ENCODE measurements at regions of chr3 and their contacts with region 1.

Region 1: GRCh38 chr3:183766745-183767606 is 58.4 kb downstream of the MAP6D1 start:
- DNase-seq: peak; percentile 65 to 71 (median 68)
- H3K4me3 ChIP-seq: no peak overlapping the region
- H3K4me3 Mint-ChIP-seq: no peak overlapping the region
- H3K27ac ChIP-seq: no peak overlapping the region
- H3K27ac Mint-ChIP-seq: peak overlapping the region in 4 of 7 donors; percentile 10 to 72 (median 53)
- H3K4me1 ChIP-seq: no peaks in the 10 kb centered on the region
- H3K4me1 Mint-ChIP-seq: peaks cover 5 to 16% (median 10%) of the 10 kb centered on the region in 4 donors
- H3K27me3 ChIP-seq: no peaks in the 10 kb centered on the region
- H3K27me3 Mint-ChIP-seq: no peaks in the 10 kb centered on the region

Region 2: DNA sequence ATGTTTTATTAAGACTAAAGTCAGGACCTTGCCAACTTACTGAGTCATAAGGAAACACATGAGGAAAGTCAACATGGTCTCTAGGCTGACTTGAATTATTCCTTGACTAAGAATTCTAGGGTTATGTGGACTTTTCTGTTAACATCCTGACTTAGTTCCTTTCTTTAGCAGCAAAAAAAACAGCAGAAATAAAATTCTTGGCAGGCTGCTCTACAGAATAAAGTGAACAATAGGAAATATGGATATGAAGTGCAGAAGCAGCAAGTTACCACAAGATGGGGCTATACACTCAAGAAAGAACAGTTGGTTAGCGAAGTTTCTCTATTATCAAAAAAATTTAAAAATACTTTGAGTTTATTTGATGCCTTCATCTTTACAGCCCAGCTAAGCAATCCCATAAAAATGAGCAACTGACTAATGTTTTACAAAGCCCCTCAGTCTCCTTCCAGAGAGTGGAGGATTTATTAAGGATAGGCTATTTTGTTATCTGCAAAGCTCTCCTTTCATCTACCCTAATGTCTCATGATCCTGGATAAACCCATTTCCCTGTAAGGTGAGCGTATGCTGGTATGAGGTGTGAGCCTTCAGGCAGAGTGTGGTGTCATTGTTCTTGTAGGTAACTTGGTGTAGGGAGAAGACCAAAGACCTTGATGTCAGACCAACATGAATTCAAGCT is 644.6 kb before region 1 on chr3:
- CTCF ChIA-PET with region 1: interaction called, 7 read pairs
- POLR2A ChIA-PET with region 1: no interaction called
- intact Hi-C with region 1: loop called (anchors 1 kb)
- DNase-seq: peak in 4 of 5 donors; percentile 53 to 55 (median 54)
- H3K4me3 ChIP-seq: no peak overlapping the region
- H3K4me3 Mint-ChIP-seq: no peak overlapping the region
- H3K27ac ChIP-seq: no peak overlapping the region
- H3K27ac Mint-ChIP-seq: no peak overlapping the region
- H3K4me1 ChIP-seq: no peaks in the 10 kb centered on the region
- H3K4me1 Mint-ChIP-seq: no peaks in the 10 kb centered on the region
- H3K27me3 ChIP-seq: no peaks in the 10 kb centered on the region
- H3K27me3 Mint-ChIP-seq: peaks cover 0 to 2% of the 10 kb centered on the region in 2 donors

Region 3: GRCh38 chr3:183468424-183468823 is 298.6 kb before region 1 on chr3:
- CTCF ChIA-PET with region 1: interaction called, 153 read pairs
- POLR2A ChIA-PET with region 1: no interaction called
- intact Hi-C with region 1: loop called (anchors 1 kb)
- DNase-seq: no peak
- H3K4me3 ChIP-seq: no peak overlapping the region
- H3K4me3 Mint-ChIP-seq: no peak overlapping the region
- H3K27ac ChIP-seq: no peak overlapping the region
- H3K27ac Mint-ChIP-seq: no peak overlapping the region
- H3K4me1 ChIP-seq: peaks cover 7% of the 10 kb centered on the region
- H3K4me1 Mint-ChIP-seq: peaks cover 2 to 6% (median 6%) of the 10 kb centered on the region in 4 donors
- H3K27me3 ChIP-seq: no peaks in the 10 kb centered on the region
- H3K27me3 Mint-ChIP-seq: no peaks in the 10 kb centered on the region

Region 4: DNA sequence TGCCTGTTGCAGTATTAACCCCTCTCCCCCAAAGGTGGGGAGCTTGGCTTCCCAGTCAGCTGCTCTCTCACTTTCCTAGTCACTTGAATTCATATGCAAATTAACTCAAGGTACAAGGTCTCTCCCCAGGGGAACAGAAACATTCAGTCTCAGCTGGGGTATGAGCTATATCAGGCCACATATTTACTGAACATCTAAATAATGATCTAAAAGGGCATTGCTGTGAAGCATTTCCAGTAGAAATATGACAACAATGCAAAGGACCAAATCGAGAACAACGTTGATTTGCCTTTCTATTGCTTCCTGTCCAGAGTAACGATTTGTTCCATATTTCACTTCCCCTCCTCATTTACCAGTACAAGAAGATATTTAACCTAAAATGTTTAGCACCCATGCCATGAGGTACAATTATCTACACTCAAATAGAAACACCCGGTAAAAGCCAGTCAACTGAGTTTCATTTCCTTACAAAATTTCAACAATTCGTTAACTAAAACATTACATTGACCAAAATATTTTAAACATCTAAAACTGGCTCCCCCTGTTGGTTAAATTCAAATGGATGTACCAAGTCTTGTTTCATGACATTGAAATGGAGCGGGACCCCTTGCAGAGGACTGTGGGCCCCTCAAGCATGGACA is 175.0 kb before region 1 on chr3:
- CTCF ChIA-PET with region 1: interaction called, 19 read pairs
- POLR2A ChIA-PET with region 1: no interaction called
- intact Hi-C with region 1: loop called (anchors 1 kb)
- DNase-seq: peak in 4 of 5 donors; percentile 32 to 41 (median 38)
- H3K4me3 ChIP-seq: no peak overlapping the region
- H3K4me3 Mint-ChIP-seq: peak overlapping the region; percentile 56 to 88 (median 82)
- H3K27ac ChIP-seq: no peak overlapping the region
- H3K27ac Mint-ChIP-seq: peak overlapping the region; percentile 49 to 92 (median 78)
- H3K4me1 ChIP-seq: peaks cover 43% of the 10 kb centered on the region
- H3K4me1 Mint-ChIP-seq: peaks cover 23 to 46% (median 34%) of the 10 kb centered on the region in 4 donors
- H3K27me3 ChIP-seq: no peaks in the 10 kb centered on the region
- H3K27me3 Mint-ChIP-seq: no peaks in the 10 kb centered on the region

Region 5: GRCh38 chr3:183789826-183790225 is 22.9 kb after region 1 on chr3:
- CTCF ChIA-PET with region 1: interaction called, 10 read pairs
- POLR2A ChIA-PET with region 1: no interaction called
- intact Hi-C with region 1: no loop called
- DNase-seq: no peak
- H3K4me3 ChIP-seq: no peak overlapping the region
- H3K4me3 Mint-ChIP-seq: no peak overlapping the region
- H3K27ac ChIP-seq: no peak overlapping the region
- H3K27ac Mint-ChIP-seq: no peak overlapping the region
- H3K4me1 ChIP-seq: no peaks in the 10 kb centered on the region
- H3K4me1 Mint-ChIP-seq: peaks cover 5 to 12% (median 7%) of the 10 kb centered on the region in 4 donors
- H3K27me3 ChIP-seq: no peaks in the 10 kb centered on the region
- H3K27me3 Mint-ChIP-seq: no peaks in the 10 kb centered on the region

Region 6: GRCh38 chr3:183884427-183885296 is 117.7 kb after region 1 on chr3 and contains the start of gene PARL:
- CTCF ChIA-PET with region 1: interaction called, 14 read pairs
- POLR2A ChIA-PET with region 1: no interaction called
- intact Hi-C with region 1: no loop called
- DNase-seq: peak; percentile 93 to 95 (median 94)
- H3K4me3 ChIP-seq: peak within 1 kb of the TSS; percentile 85 to 95
- H3K4me3 Mint-ChIP-seq: peak within 1 kb of the TSS; percentile 92 to 98 (median 95)
- H3K27ac ChIP-seq: peak within 1 kb of the TSS; percentile 74
- H3K27ac Mint-ChIP-seq: peak within 1 kb of the TSS; percentile 88 to 96 (median 93)
- H3K4me1 ChIP-seq: peaks cover 28% of the 10 kb centered on the region
- H3K4me1 Mint-ChIP-seq: peaks cover 24 to 50% (median 34%) of the 10 kb centered on the region in 4 donors
- H3K27me3 ChIP-seq: no peaks in the 10 kb centered on the region
- H3K27me3 Mint-ChIP-seq: no peaks in the 10 kb centered on the region
- total RNA-seq, gene PARL: 46.9 to 50.2 TPM

Measured in CD4-positive, alpha-beta memory T cell (primary cell).